Activated CD4-positive, alpha-beta memory T cell treated with anti-CD3 and anti-CD28 coated beads for 36 hours (primary cell): ENCODE measurements at regions of chr10 and their contacts with region 1.

Region 1: GRCh38 chr10:97676770-97677581 is 10.1 kb downstream of the AVPI1 start:
- DNase-seq: peak; percentile 51
- H3K4me3 Mint-ChIP-seq: no peak overlapping the region
- H3K27ac Mint-ChIP-seq: no peak overlapping the region
- H3K4me1 Mint-ChIP-seq: peaks cover 6% of the 10 kb centered on the region
- H3K27me3 Mint-ChIP-seq: no peaks in the 10 kb centered on the region

Region 2: DNA sequence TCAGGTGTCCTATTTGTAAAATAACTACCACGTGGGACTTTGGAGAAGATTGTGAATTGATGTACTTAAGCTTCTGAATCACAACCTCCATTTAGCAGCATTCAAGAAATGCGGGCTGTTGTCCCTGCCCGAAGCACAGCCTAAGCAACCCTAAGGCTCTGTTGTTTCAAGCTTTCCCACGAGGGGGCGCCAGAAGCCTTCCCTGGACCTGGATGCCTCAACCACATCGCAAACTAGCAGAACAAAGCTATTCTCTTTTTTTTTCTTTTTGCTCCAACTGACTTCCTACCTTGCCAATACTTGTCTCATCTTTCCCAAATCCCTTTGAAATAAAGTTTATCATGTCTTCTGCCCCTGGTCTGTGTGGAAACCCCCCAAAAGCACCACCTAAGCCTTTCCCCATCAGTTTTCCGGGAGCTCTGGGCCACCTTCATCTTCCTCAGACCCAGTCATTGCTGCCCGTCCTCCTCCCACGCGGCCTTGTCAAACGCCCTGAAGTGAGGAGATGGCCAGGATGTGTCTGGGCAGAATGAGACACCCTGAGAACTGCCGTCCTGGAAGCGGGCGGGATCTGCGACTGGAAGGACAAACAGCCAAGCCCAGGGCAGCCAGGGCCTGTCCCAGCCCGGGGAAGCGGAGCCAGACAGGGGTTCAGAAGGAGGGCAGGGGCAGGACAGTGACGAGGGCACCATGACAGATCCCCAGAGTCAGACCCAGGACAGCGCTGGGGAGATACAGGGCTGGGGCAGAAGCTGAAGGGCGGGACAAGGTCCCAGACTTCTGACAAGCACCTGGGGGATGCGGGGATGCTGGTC is 603.9 kb before region 1 on chr10:
- CTCF ChIA-PET with region 1: no interaction called
- POLR2A ChIA-PET with region 1: no interaction called
- intact Hi-C with region 1: no loop called
- DNase-seq: peak; percentile 89
- H3K4me3 Mint-ChIP-seq: no peak overlapping the region
- H3K27ac Mint-ChIP-seq: no peak overlapping the region
- H3K4me1 Mint-ChIP-seq: peaks cover 13% of the 10 kb centered on the region
- H3K27me3 Mint-ChIP-seq: peaks cover 15% of the 10 kb centered on the region

Region 3: GRCh38 chr10:97656777-97657176 is 20.2 kb before region 1 on chr10:
- CTCF ChIA-PET with region 1: no interaction called
- POLR2A ChIA-PET with region 1: no interaction called
- intact Hi-C with region 1: no loop called
- DNase-seq: no peak
- H3K4me3 Mint-ChIP-seq: no peak overlapping the region
- H3K27ac Mint-ChIP-seq: no peak overlapping the region
- H3K4me1 Mint-ChIP-seq: no peaks in the 10 kb centered on the region
- H3K27me3 Mint-ChIP-seq: no peaks in the 10 kb centered on the region

Region 4: GRCh38 chr10:97701438-97702069 is 24.6 kb after region 1 on chr10:
- CTCF ChIA-PET with region 1: interaction called, 17 read pairs
- POLR2A ChIA-PET with region 1: interaction called, 3 read pairs
- intact Hi-C with region 1: loop called (anchors 1 kb)
- DNase-seq: peak; percentile 62
- H3K4me3 Mint-ChIP-seq: no peak overlapping the region
- H3K27ac Mint-ChIP-seq: no peak overlapping the region
- H3K4me1 Mint-ChIP-seq: no peaks in the 10 kb centered on the region
- H3K27me3 Mint-ChIP-seq: peaks cover 4% of the 10 kb centered on the region

Region 5: DNA sequence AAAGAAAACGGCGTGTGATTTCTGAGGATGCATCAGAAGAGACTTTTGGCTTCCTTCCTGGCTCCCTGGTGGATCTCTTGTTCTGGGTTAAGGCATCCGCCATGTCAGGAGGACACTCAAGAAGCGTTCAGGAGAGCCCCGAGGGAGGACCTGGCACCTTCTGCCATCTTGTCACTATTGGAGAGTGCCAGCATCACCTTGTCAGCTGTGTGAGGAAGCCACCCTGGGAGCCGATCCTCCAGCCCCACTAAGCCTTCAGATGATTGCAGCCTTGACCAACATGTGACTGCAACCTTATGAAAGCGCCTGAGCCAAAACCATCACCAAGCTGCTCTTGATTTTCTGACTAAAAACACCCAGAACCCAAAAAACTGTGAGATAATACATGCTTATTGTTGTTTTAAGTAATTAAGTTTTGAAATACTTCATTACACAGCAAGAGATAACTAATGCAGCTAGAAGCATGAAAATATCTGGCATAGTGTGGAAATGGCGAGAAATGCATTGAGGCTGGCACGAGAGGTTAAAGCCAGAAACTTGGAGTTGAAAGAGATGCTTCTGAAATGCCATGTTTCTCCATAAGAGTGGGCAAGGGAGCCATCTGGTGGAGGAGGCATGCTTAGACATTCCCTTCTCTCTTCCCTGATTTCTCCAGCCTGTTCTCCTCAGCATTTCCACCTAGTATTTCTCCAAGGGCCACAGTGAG is 54.5 kb after region 1 on chr10:
- CTCF ChIA-PET with region 1: interaction called, 43 read pairs
- POLR2A ChIA-PET with region 1: no interaction called
- intact Hi-C with region 1: loop called (anchors 1 kb)
- DNase-seq: peak; percentile 63
- H3K4me3 Mint-ChIP-seq: no peak overlapping the region
- H3K27ac Mint-ChIP-seq: no peak overlapping the region
- H3K4me1 Mint-ChIP-seq: peaks cover 10% of the 10 kb centered on the region
- H3K27me3 Mint-ChIP-seq: peaks cover 8% of the 10 kb centered on the region

Region 6: DNA sequence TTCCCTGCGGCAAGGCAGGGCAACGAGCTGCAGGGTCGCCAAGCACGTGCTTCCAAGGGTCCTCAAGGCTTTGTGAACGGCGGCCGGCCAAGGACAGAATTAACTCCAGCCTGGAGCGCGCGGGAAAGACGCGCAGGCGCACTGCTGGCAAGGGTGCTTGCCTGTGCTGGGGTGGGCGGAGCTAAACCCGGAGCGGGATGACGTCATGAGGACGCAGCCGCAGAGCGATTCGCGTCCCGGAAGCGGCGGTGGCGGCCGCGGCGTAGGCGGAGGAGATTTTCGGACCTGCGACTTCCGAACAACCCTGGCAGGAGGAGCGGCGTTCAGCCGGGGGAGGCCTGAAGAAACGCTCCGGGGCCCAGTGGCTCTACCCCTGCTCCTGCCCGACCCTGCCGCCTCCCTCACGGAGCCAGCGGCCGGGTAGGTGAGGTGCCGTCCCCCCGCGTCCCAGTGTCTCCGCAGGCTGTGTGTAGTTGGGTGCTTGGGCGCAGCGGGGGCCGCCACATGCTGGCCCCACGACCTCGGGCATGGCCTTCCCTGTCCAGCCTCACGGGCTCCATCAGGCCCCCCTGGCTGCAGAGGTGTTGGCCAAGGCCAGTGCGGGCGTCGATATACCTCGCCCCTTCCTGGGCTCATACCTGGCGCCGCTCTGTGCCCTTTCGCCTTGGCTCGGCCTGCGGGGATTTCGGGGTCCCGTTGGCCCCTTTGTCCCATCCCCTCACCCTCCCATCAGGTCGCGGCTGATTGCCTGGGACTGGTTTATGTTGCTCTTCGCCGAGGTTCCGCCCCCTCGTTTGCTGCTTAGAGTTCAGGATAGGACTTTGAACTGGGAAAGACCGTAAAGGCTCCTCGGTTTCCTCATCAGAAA is 60.2 kb after region 1 on chr10 and contains the start of gene ZFYVE27:
- CTCF ChIA-PET with region 1: interaction called, 43 read pairs
- POLR2A ChIA-PET with region 1: no interaction called
- intact Hi-C with region 1: no loop called
- DNase-seq: peak; percentile 98
- H3K4me3 Mint-ChIP-seq: peak within 1 kb of the TSS; percentile 95
- H3K27ac Mint-ChIP-seq: peak within 1 kb of the TSS; percentile 89
- H3K4me1 Mint-ChIP-seq: peaks cover 41% of the 10 kb centered on the region
- H3K27me3 Mint-ChIP-seq: no peaks in the 10 kb centered on the region
- total RNA-seq, gene ZFYVE27: 20.9 to 22.8 TPM